RWPE1 (cell line): ENCODE measurements at regions of chr5 and their contacts with region 1.

Region 1: DNA sequence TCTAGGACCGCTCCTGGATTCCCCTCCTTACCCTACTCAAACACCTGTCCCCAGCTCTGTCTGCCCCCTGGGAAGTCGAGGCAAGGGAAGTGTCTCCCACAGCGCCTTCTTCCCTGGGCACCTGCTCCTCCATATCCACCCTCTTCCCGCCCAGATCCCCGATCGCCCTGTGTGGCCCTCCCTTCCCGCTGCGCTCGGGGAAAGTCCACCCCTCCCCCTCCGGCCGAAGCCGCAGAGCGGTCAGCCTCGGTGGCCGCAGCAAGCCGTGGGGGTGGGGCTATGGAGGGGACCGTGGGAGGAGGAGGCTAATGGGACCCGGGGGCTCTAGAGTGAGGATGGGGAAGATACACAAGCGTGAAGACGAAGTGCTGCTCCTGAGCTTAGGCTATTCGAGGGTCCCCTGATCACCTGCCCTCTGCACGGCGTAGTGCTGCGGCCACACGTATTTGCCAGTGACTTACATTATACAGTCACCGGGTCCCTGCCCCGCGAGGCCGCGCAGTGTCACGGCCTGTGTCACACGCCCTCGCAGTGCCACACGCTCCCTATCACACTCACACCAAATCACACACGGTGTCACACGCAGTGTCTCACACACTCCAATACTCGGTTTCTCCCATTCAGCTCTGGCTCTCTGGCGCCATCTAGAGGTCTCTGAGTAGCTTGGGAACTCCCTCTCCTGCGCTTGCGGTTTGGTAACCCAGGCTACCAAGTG is 658 bp upstream of the PCDH1 start:
- DNase-seq: peak; percentile 78
- H3K27ac ChIP-seq: peak overlapping the region; percentile 67
- CTCF ChIP-seq: peak; percentile 99

Region 2: GRCh38 chr5:141691867-141692532 is 186.9 kb before region 1 on chr5:
- CTCF ChIA-PET with region 1: interaction called, 157 read pairs
- POLR2A ChIA-PET with region 1: no interaction called
- DNase-seq: peak; percentile 84
- H3K27ac ChIP-seq: no peak overlapping the region
- CTCF ChIP-seq: peak; percentile 99

Region 3: GRCh38 chr5:141713616-141714309 is 165.1 kb before region 1 on chr5:
- CTCF ChIA-PET with region 1: interaction called, 23 read pairs
- POLR2A ChIA-PET with region 1: no interaction called
- DNase-seq: peak; percentile 93
- H3K27ac ChIP-seq: peak overlapping the region; percentile 82
- CTCF ChIP-seq: no peak

Region 4: DNA sequence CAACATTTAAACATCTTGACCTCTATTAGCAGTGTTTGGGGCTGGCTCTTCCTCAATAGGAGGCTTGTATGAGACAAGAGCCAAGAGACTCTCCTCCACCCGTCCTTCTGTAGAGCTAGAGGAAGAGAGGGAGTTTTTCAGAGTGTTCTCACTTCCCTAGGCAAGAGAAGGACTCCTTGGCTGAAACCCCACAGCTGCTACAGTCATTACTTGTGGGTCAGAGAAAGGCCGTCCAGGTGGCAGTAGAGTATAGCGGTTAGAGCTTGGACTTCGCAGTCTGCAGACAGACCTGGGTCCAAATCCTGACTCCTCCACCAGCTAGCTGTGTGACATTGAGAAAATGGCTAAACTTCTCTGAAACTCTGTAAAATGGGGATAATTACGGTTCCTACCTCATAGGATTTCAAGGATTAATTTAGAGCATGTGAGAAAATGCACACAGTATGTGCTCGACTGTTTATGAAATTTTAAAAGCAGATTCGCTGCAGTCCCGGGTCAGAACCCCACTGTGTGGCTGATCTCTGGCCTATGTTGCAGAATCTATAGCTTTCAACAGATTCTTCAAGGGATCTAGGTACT is 116.0 kb before region 1 on chr5:
- CTCF ChIA-PET with region 1: interaction called, 106 read pairs
- POLR2A ChIA-PET with region 1: interaction called, 3 read pairs
- DNase-seq: no peak
- H3K27ac ChIP-seq: no peak overlapping the region
- CTCF ChIP-seq: no peak

Region 5: DNA sequence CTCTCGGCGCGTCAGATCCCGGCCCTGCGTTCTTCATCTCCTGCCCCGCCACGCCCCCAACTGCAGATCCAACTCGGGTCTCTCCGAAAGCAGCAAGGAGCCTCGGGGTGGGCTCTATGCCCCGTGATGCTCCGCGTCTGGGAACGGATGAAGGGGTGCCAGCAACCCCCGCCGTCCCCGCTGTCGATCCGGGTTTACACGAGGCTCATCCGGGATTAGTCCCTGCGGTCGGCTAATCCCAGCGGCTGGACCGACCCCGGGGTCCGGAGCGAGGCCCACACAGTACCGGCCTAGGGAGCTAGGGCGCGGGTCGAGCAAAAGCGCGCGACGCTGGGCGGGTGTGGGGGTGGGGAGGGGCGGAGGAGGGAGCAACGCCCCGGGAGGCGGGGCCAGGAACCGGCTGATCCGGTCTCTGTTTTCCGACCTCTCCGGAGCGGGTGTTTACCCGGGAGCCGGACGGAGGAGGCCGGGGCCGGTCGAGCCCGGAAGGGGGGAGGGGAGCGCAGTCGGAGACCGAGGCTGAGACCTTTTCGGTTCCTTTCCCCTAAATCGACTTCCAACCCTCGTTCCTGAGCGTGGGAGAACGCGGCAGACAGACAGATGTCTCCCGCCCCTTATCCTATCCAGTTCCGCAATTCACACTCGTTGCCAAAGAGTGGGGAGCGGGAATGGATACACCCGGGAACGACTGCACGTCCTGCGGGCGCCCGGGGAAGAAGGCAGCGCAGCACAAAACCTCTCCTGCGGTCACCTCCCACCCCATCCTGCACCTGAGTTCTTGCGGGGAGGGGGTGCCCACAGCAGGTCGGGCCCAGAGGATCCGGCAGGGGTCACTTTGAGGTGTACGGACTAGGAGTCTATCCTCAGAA is 29.3 kb before region 1 on chr5:
- CTCF ChIA-PET with region 1: interaction called, 7 read pairs
- POLR2A ChIA-PET with region 1: interaction called, 11 read pairs
- DNase-seq: peak; percentile 98
- H3K27ac ChIP-seq: peak overlapping the region; percentile 99
- CTCF ChIP-seq: no peak

Region 6: DNA sequence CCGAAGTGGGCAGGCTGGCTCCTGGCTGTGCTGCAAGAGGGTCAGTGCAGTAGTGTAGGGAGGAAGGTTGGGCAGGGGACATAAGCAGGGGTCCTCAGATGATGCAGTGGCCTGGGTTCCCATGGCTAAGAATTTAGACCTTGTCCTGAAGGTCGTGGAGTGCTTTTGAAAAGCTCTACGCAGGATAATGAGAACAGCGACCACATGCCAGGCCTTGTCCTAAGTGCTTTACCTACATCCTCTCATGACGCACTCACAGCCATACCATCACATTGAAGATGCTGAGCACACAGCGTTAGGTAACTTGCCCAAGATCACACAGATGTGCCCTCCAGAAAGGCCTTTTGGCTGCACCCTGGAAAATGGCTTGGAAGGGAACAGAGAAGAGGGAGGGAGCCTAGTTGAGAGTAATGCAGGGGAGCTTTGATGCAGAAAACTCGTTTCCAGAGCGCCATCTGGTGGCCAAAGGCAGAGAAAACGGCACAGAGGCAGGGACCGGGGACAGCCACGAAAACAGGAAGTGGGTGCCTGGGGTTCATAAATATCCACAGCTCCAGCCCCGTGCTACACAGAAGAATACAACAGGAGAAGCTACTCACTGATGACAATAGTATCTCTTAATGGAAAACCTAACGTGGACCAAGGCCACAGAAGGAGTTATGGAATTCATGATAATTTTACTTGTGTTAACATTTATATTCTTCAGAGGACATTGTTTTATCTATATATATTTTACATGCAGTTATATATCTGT is 81.8 kb after region 1 on chr5:
- CTCF ChIA-PET with region 1: interaction called, 32 read pairs
- POLR2A ChIA-PET with region 1: interaction called, 3 read pairs
- DNase-seq: peak; percentile 88
- H3K27ac ChIP-seq: no peak overlapping the region
- CTCF ChIP-seq: peak; percentile 94

Region 7: DNA sequence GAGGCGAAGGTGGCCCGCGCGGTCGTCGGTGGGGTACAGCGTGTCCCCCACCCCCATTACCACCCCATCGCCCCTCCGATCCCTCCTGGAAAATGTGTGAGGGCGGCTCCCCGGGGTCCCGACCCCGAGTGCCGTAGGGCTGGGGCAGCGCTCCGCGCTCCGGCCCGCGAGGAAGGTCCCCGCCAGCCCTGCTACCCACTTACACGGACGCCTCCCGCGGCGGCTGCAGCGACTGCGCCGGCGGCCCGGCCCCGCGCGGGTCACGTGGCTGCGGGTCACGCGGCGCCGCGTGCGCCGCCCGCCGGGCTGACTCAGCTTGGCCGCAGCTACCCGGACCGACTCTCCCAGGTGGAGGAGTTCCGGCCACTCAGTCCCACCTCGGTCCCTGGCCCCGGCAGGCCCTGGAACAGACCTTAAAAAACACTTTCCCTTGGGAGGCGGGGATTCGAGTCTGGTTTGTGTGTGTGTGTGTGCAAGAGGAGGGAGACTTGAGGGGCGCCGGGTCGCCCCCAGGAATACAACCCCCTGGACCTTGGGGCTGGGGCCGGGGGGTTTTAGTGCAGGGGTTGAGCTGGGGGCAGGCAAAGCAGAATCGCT is 134.0 kb after region 1 on chr5 and contains the start of gene GNPDA1:
- CTCF ChIA-PET with region 1: no interaction called
- POLR2A ChIA-PET with region 1: no interaction called
- DNase-seq: peak; percentile 95
- H3K27ac ChIP-seq: peak within 1 kb of the TSS; percentile 77
- CTCF ChIP-seq: peak; percentile 25

Region 8: DNA sequence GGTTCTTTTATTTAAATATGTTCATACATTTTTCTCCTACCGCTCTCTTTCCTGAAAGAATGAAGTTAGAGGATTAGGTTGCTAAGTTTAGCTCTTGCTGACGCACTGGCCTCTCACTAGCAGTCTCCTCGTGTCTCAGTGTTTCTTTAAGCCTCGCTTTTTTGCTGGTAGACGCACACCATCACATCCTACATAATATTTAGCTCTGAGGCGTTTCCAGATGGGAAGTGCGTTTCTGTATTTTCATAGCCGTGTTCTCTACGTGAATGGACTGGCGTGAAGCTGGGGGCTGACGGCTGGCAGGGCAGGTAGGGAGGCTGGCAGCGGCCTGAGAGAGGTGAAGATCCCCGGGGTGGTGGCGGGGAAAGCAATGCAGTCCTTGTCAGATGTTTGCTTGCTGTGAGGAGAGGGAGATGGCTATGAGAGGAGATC is 525.2 kb after region 1 on chr5:
- CTCF ChIA-PET with region 1: no interaction called
- POLR2A ChIA-PET with region 1: no interaction called
- DNase-seq: no peak
- H3K27ac ChIP-seq: no peak overlapping the region
- CTCF ChIP-seq: no peak